ENCODE measurements at regions of chr6 and their contacts with region 1.

Region 1: GRCh38 chr6:111210194-111210728 is 123.0 kb downstream of the SLC16A10 start:
- DNase-seq: peak; percentile 73
- H3K4me3 ChIP-seq: no peak overlapping the region
- H3K27ac ChIP-seq: no peak overlapping the region
- H3K4me1 ChIP-seq: no peaks in the 10 kb centered on the region
- H3K27me3 ChIP-seq: peaks cover 0 to 1% of the 10 kb centered on the region in 2 experiments
- CTCF ChIP-seq: peak; percentile 47 to 60
- POLR2A ChIP-seq: no peak

Region 2: GRCh38 chr6:110456694-110457093 is 753.6 kb before region 1 on chr6:
- CTCF ChIA-PET with region 1: interaction called, 4 read pairs
- POLR2A ChIA-PET with region 1: no interaction called
- dilution Hi-C with region 1: no loop called
- intact Hi-C with region 1: loop called (anchors 10 kb)
- DNase-seq: no peak
- H3K4me3 ChIP-seq: no peak overlapping the region
- H3K27ac ChIP-seq: no peak overlapping the region
- H3K4me1 ChIP-seq: no peaks in the 10 kb centered on the region
- H3K27me3 ChIP-seq: peaks cover 5 to 22% of the 10 kb centered on the region in 2 experiments
- CTCF ChIP-seq: no peak
- POLR2A ChIP-seq: no peak

Region 3: GRCh38 chr6:110682460-110682853 is 527.8 kb before region 1 on chr6:
- CTCF ChIA-PET with region 1: interaction called, 5 read pairs
- POLR2A ChIA-PET with region 1: no interaction called
- dilution Hi-C with region 1: no loop called
- intact Hi-C with region 1: loop called (anchors 1 kb)
- DNase-seq: peak; percentile 84
- H3K4me3 ChIP-seq: no peak overlapping the region
- H3K27ac ChIP-seq: no peak overlapping the region
- H3K4me1 ChIP-seq: peaks cover 6% of the 10 kb centered on the region
- H3K27me3 ChIP-seq: peaks cover 0 to 1% of the 10 kb centered on the region in 2 experiments
- CTCF ChIP-seq: peak; percentile 37 to 54
- POLR2A ChIP-seq: no peak

Region 4: GRCh38 chr6:111011360-111012142 is 198.7 kb before region 1 on chr6:
- CTCF ChIA-PET with region 1: interaction called, 60 read pairs
- POLR2A ChIA-PET with region 1: interaction called, 6 read pairs
- dilution Hi-C with region 1: no loop called
- intact Hi-C with region 1: loop called (anchors 2 kb)
- DNase-seq: peak; percentile 57
- H3K4me3 ChIP-seq: no peak overlapping the region
- H3K27ac ChIP-seq: no peak overlapping the region
- H3K4me1 ChIP-seq: no peaks in the 10 kb centered on the region
- H3K27me3 ChIP-seq: no peaks in the 10 kb centered on the region
- CTCF ChIP-seq: peak; percentile 43 to 45
- POLR2A ChIP-seq: no peak

Region 5: GRCh38 chr6:111057074-111057752 is 153.0 kb before region 1 on chr6:
- CTCF ChIA-PET with region 1: interaction called, 64 read pairs
- POLR2A ChIA-PET with region 1: interaction called, 3 read pairs
- dilution Hi-C with region 1: no loop called
- intact Hi-C with region 1: loop called (anchors 1 kb)
- DNase-seq: peak; percentile 49
- H3K4me3 ChIP-seq: no peak overlapping the region
- H3K27ac ChIP-seq: no peak overlapping the region
- H3K4me1 ChIP-seq: no peaks in the 10 kb centered on the region
- H3K27me3 ChIP-seq: peaks cover 7 to 9% of the 10 kb centered on the region in 2 experiments
- CTCF ChIP-seq: peak; percentile 56 to 64
- POLR2A ChIP-seq: no peak

Region 6: DNA sequence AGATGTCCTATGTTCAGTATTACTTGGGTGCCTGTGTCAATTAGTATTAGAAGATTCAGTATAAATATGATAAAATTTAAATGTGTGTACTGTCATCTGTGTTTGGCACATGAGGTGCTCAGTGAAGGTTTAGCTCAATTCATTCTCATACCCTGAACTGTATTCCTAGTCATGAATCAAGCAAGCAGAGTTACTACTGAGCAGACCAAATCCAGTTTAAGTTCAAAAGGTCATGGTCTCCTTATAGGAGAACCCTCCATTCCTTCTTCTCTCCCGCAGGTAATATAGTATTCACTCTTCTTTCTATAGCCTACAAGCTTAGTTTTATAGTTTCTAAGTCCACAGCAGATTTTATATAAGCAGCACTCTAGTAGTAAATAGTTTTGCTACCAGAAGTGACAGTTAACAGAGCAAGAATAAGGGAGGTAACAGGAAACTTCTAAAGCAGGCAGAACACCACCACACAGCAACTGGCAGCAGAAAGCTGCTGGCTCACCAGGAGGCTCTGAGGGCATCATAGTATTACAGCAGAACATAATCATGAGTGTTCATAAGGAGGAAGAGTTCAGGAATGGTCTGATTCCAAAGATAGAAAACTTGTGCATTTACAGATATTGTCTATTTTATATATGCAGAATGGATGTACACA is 10.2 kb after region 1 on chr6:
- CTCF ChIA-PET with region 1: interaction called, 25 read pairs
- POLR2A ChIA-PET with region 1: no interaction called
- dilution Hi-C with region 1: no loop called
- intact Hi-C with region 1: no loop called
- DNase-seq: no peak
- H3K4me3 ChIP-seq: no peak overlapping the region
- H3K27ac ChIP-seq: no peak overlapping the region
- H3K4me1 ChIP-seq: no peaks in the 10 kb centered on the region
- H3K27me3 ChIP-seq: peaks cover 4 to 10% of the 10 kb centered on the region in 2 experiments
- CTCF ChIP-seq: no peak
- POLR2A ChIP-seq: no peak

Measured in endothelial cell of umbilical vein (primary cell).